Right cardiac atrium (tissue), 5 donors: ENCODE measurements at regions of chr3 and their contacts with region 1.

Region 1: GRCh38 chr3:13495921-13496723 is 16.0 kb downstream of the HDAC11 start:
- DNase-seq: peak; percentile 78 to 93 (median 87)
- ATAC-seq: peak; percentile 86 to 88
- H3K4me3 ChIP-seq: no peak overlapping the region
- H3K27ac ChIP-seq: peak overlapping the region; percentile 13
- H3K4me1 ChIP-seq: peaks cover 2% of the 10 kb centered on the region
- H3K27me3 ChIP-seq: no peaks in the 10 kb centered on the region

Region 2: DNA sequence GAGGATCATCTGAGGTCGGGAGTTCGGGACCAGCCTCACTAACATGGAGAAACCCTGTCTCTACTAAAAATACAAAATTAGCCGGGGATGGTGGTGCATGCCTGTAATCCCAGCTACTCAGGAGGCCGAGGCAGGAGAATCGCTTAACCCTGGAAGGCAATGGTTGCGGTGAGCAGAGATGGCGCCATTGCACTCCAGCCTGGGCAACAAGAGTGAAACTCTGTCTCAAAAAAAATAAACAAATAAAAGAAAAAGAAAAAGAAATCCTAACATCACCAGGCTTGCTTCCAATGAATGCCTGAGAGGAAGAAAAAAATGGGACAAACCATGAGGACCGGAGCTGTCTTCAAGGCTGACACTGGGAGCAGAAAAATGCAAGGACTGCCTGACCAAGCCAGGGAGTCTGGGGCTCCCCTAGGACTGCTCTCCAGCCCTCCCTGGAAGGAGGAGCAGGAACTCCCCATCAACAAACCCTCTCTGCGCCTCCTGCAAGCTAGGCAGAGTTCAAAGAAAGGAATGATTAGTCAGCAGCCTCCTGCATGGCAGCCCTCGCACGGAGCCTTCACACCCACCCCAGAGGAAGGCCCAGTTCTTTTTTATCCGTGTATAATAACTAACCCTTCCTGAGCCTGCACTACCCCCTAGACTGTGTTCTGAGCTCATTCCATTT is 131.4 kb before region 1 on chr3:
- intact Hi-C with region 1: no loop called
- DNase-seq: no peak
- ATAC-seq: no peak
- H3K4me3 ChIP-seq: no peak overlapping the region
- H3K27ac ChIP-seq: no peak overlapping the region
- H3K4me1 ChIP-seq: no peaks in the 10 kb centered on the region
- H3K27me3 ChIP-seq: no peaks in the 10 kb centered on the region

Region 3: GRCh38 chr3:13559764-13560525 is 63.8 kb after region 1 on chr3:
- intact Hi-C with region 1: loop called in 1 of 4 experiments (anchors 10 kb)
- DNase-seq: peak; percentile 74 to 83 (median 83)
- ATAC-seq: peak; percentile 67 to 86
- H3K4me3 ChIP-seq: no peak overlapping the region
- H3K27ac ChIP-seq: peak overlapping the region; percentile 9
- H3K4me1 ChIP-seq: peaks cover 6% of the 10 kb centered on the region
- H3K27me3 ChIP-seq: no peaks in the 10 kb centered on the region